Panc1 (cell line): ENCODE measurements at regions of chr5 and their contacts with region 1.

Region 1: GRCh38 chr5:140329739-140330481 is 16.5 kb downstream of the HBEGF start:
- DNase-seq: no peak
- ATAC-seq: peak; percentile 55; the same call in 1 of the 2 replicates
- H3K4me3 ChIP-seq: no peak overlapping the region
- H3K27ac ChIP-seq: no peak overlapping the region
- H3K4me1 ChIP-seq: no peaks in the 10 kb centered on the region
- H3K27me3 ChIP-seq: no peaks in the 10 kb centered on the region
- CTCF ChIP-seq: no peak

Region 2: GRCh38 chr5:140259500-140259899 is 70.4 kb before region 1 on chr5:
- CTCF ChIA-PET with region 1: no interaction called
- POLR2A ChIA-PET with region 1: interaction called, 11 read pairs
- in situ Hi-C with region 1: no loop called
- intact Hi-C with region 1: no loop called
- DNase-seq: no peak
- ATAC-seq: no peak
- H3K4me3 ChIP-seq: no peak overlapping the region
- H3K27ac ChIP-seq: no peak overlapping the region
- H3K4me1 ChIP-seq: peaks cover 20% of the 10 kb centered on the region
- H3K27me3 ChIP-seq: no peaks in the 10 kb centered on the region
- CTCF ChIP-seq: no peak

Region 3: GRCh38 chr5:140295414-140295813 is 34.5 kb before region 1 on chr5:
- CTCF ChIA-PET with region 1: no interaction called
- POLR2A ChIA-PET with region 1: no interaction called
- in situ Hi-C with region 1: no loop called
- intact Hi-C with region 1: no loop called
- DNase-seq: no peak
- ATAC-seq: peak; percentile 58; the same call in 1 of the 2 replicates
- H3K4me3 ChIP-seq: no peak overlapping the region
- H3K27ac ChIP-seq: no peak overlapping the region
- H3K4me1 ChIP-seq: peaks cover 45% of the 10 kb centered on the region
- H3K27me3 ChIP-seq: no peaks in the 10 kb centered on the region
- CTCF ChIP-seq: no peak